ENCODE measurements at regions of chr6 and their contacts with region 1.

Region 1: GRCh38 chr6:148166339-148166968 is 176.2 kb upstream of the SASH1 start:
- DNase-seq: no peak
- H3K4me3 ChIP-seq: no peak overlapping the region
- H3K27ac ChIP-seq: no peak overlapping the region
- H3K4me1 ChIP-seq: no peaks in the 10 kb centered on the region
- H3K27me3 ChIP-seq: no peaks in the 10 kb centered on the region
- CTCF ChIP-seq: peak; percentile 24 to 74 (median 56)
- EP300 ChIP-seq: no peak
- POLR2A ChIP-seq: no peak

Region 2: DNA sequence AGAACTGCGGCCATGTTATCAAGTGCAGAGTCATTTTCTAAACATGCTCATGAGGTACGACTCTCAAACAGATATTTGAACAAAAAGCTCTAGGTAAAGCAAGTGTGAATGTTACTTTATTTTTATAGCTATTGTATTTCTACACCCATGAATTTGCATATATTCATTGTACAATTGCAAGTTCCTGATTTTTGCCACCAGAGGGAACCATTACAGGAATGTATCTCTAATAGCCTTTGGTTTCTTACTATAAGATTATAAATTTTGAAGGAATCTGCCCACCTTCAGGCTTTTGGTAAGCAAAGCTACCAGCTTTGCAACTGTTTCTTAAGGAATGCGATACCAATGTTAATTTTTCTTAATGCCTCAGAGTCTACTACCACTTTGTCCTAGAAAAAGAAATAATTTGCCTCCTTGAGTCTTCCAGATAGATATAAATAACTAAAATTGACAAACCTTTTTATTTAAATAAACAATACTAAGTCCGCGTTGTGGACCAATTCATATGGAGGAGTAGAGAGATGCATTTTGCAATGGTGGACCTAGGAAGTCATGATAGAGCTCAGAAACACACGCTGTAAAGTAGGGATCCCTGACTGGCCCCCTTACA is 783.4 kb before region 1 on chr6:
- intact Hi-C with region 1: loop called (anchors 10 kb)
- DNase-seq: no peak
- H3K4me3 ChIP-seq: no peak overlapping the region
- H3K27ac ChIP-seq: no peak overlapping the region
- H3K4me1 ChIP-seq: no peaks in the 10 kb centered on the region
- H3K27me3 ChIP-seq: no peaks in the 10 kb centered on the region
- CTCF ChIP-seq: peak in 3 of 4 experiments; percentile 15 to 52 (median 17)
- EP300 ChIP-seq: no peak
- POLR2A ChIP-seq: no peak

Region 3: DNA sequence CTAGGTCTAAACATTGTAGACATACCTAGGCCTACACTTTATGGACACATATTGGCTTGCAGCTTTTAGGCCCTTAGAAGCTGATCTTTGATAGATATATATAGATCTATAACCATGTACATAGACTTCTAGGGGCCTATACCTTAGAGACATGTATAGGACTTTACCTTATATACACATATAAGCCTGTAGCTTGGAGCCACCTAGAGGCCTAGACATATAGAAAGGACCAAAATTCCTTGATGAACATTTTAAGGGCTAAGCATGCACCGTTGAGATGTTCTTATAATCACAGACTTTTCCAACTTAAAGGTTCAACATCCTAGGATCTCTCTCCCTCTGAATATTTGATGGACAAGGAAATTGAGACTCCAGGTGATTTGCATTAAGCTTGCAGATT is 195.5 kb before region 1 on chr6:
- intact Hi-C with region 1: no loop called
- DNase-seq: no peak
- H3K4me3 ChIP-seq: no peak overlapping the region
- H3K27ac ChIP-seq: no peak overlapping the region
- H3K4me1 ChIP-seq: no peaks in the 10 kb centered on the region
- H3K27me3 ChIP-seq: no peaks in the 10 kb centered on the region
- CTCF ChIP-seq: no peak
- EP300 ChIP-seq: no peak
- POLR2A ChIP-seq: no peak

Region 4: GRCh38 chr6:148223424-148223842 is 57.0 kb after region 1 on chr6:
- intact Hi-C with region 1: no loop called
- DNase-seq: no peak
- H3K4me3 ChIP-seq: no peak overlapping the region
- H3K27ac ChIP-seq: no peak overlapping the region
- H3K4me1 ChIP-seq: peaks cover 0 to 7% (median 6%) of the 10 kb centered on the region in 4 donors
- H3K27me3 ChIP-seq: no peaks in the 10 kb centered on the region
- CTCF ChIP-seq: no peak
- EP300 ChIP-seq: no peak
- POLR2A ChIP-seq: no peak